Activated B cell treated with CpG ODN at 0.5 μM for 24 hours (primary cell): ENCODE measurements at regions of chr9 and their contacts with region 1.

Region 1: GRCh38 chr9:4740638-4741364 is at the start of gene AK3:
- DNase-seq: peak; percentile 79
- ATAC-seq: peak; percentile 93
- H3K4me3 Mint-ChIP-seq: peak within 1 kb of the TSS; percentile 90
- H3K27ac Mint-ChIP-seq: peak within 1 kb of the TSS; percentile 83
- H3K4me1 Mint-ChIP-seq: peaks cover 30% of the 10 kb centered on the region
- H3K27me3 Mint-ChIP-seq: no peaks in the 10 kb centered on the region
- CTCF ChIP-seq: no peak
- total RNA-seq, gene AK3: 14.5 and 16.9 TPM in 2 replicates

Region 2: GRCh38 chr9:4464911-4465513 is 275.8 kb before region 1 on chr9:
- CTCF ChIA-PET with region 1: no interaction called
- POLR2A ChIA-PET with region 1: no interaction called
- intact Hi-C with region 1: loop called (anchors 10 kb)
- DNase-seq: no peak
- ATAC-seq: peak; percentile 87
- H3K4me3 Mint-ChIP-seq: peak overlapping the region; percentile 32
- H3K27ac Mint-ChIP-seq: peak overlapping the region; percentile 46
- H3K4me1 Mint-ChIP-seq: peaks cover 23% of the 10 kb centered on the region
- H3K27me3 Mint-ChIP-seq: peaks cover 4% of the 10 kb centered on the region
- CTCF ChIP-seq: no peak

Region 3: GRCh38 chr9:4662108-4662988 is 78.5 kb before region 1 on chr9 and contains the start of gene PLPP6:
- CTCF ChIA-PET with region 1: no interaction called
- POLR2A ChIA-PET with region 1: interaction called, 7 read pairs
- intact Hi-C with region 1: loop called (anchors 1 kb)
- DNase-seq: peak; percentile 66
- ATAC-seq: peak; percentile 87
- H3K4me3 Mint-ChIP-seq: peak within 1 kb of the TSS; percentile 92
- H3K27ac Mint-ChIP-seq: peak within 1 kb of the TSS; percentile 80
- H3K4me1 Mint-ChIP-seq: peaks cover 47% of the 10 kb centered on the region
- H3K27me3 Mint-ChIP-seq: peaks cover 8% of the 10 kb centered on the region
- CTCF ChIP-seq: no peak
- total RNA-seq, gene PLPP6: 8.5 and 10.2 TPM in 2 replicates

Region 4: GRCh38 chr9:4792572-4793458 is 52.0 kb after region 1 on chr9 and contains the start of gene RCL1:
- CTCF ChIA-PET with region 1: interaction called, 3 read pairs
- POLR2A ChIA-PET with region 1: interaction called, 6 read pairs
- intact Hi-C with region 1: loop called (anchors 1 kb)
- DNase-seq: peak; percentile 97
- ATAC-seq: peak; percentile 93
- H3K4me3 Mint-ChIP-seq: peak within 1 kb of the TSS; percentile 97
- H3K27ac Mint-ChIP-seq: peak within 1 kb of the TSS; percentile 96
- H3K4me1 Mint-ChIP-seq: peaks cover 40% of the 10 kb centered on the region
- H3K27me3 Mint-ChIP-seq: peaks cover 2% of the 10 kb centered on the region
- CTCF ChIP-seq: no peak
- total RNA-seq, gene RCL1: 23.9 and 26.0 TPM in 2 replicates